ENCODE measurements at regions of chr9 and their contacts with region 1.

Region 1: DNA sequence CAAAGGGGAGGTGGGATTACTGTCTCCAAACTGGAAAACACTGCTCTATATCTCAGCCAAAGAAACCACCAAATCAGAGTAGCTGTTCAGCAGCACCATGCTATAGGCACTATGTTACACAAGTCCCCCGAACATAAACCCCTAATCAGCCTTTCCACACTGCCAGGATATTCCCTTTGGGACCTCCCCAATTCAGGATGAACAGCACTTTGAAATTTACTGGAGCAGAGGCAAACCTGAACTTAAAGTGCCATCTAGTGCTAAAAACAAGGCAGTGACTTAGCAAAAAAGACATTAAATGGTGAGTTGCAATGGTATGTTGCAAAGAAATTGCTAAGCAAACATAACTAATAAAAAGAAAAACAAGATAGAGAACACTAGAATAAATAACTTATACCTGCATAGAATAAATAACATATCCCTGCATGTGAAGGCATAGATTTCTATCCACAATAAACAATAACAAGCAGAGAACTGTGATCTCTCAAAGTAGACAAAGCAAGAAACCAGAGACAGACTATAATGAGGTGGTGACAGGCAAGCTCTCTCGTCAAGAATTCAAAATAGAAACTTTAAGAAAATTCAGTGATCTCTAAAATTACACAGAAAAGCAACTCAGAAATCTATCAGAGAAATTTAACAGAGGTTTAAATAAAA is 584.4 kb upstream of the ACO1 start:
- DNase-seq: no peak
- H3K4me3 Mint-ChIP-seq: no peak overlapping the region
- H3K27ac Mint-ChIP-seq: peak overlapping the region; percentile 52
- H3K4me1 Mint-ChIP-seq: peaks cover 8% of the 10 kb centered on the region
- H3K27me3 Mint-ChIP-seq: peaks cover 3% of the 10 kb centered on the region

Region 2: GRCh38 chr9:29866556-29866955 is 1933.5 kb before region 1 on chr9:
- intact Hi-C with region 1: loop called (anchors 10 kb)
- DNase-seq: no peak
- H3K4me3 Mint-ChIP-seq: no peak overlapping the region
- H3K27ac Mint-ChIP-seq: no peak overlapping the region
- H3K4me1 Mint-ChIP-seq: no peaks in the 10 kb centered on the region
- H3K27me3 Mint-ChIP-seq: no peaks in the 10 kb centered on the region

Region 3: GRCh38 chr9:31119882-31120454 is 680.1 kb before region 1 on chr9:
- intact Hi-C with region 1: loop called (anchors 1 kb)
- DNase-seq: no peak
- H3K4me3 Mint-ChIP-seq: no peak overlapping the region
- H3K27ac Mint-ChIP-seq: no peak overlapping the region
- H3K4me1 Mint-ChIP-seq: no peaks in the 10 kb centered on the region
- H3K27me3 Mint-ChIP-seq: no peaks in the 10 kb centered on the region

Region 4: DNA sequence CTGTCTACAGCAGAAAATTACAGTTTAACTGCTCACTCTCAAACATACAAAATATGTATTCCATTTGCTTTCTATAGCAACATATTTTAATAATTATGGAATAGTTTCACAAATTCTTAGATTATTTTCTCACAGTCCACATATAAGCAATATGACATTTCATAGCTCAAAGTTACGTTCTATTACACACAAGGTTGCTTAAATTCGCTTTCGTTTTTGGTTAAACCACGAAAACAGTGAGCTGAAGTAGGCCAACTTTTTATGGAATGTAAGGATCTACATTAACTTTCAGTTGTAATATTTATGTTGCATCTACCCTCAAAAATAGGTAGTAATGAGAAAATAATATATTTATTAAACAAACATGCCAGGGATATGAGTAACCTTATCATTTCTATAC is 381.7 kb before region 1 on chr9:
- intact Hi-C with region 1: loop called (anchors 10 kb)
- DNase-seq: no peak
- H3K4me3 Mint-ChIP-seq: no peak overlapping the region
- H3K27ac Mint-ChIP-seq: no peak overlapping the region
- H3K4me1 Mint-ChIP-seq: no peaks in the 10 kb centered on the region
- H3K27me3 Mint-ChIP-seq: no peaks in the 10 kb centered on the region

Region 5: DNA sequence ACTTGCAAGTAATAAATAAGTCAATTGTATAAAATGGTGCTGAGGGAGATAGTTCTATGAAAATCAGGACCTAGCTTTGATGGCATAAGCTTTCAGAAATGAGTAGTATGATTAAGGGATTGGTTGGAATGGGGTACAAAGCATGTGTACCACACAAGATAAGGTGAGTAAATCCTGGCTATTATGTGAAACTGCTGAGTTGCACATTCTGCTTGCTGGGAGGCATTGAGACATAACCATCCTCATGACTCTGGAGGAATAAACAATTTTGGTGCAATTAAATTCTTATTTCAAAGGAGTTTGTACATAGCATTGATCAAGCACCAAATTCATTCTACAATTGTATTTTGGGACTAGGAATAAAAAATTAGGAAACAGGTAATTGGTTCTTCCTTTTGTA is 170.8 kb before region 1 on chr9:
- intact Hi-C with region 1: no loop called
- DNase-seq: no peak
- H3K4me3 Mint-ChIP-seq: no peak overlapping the region
- H3K27ac Mint-ChIP-seq: no peak overlapping the region
- H3K4me1 Mint-ChIP-seq: no peaks in the 10 kb centered on the region
- H3K27me3 Mint-ChIP-seq: no peaks in the 10 kb centered on the region

Region 6: DNA sequence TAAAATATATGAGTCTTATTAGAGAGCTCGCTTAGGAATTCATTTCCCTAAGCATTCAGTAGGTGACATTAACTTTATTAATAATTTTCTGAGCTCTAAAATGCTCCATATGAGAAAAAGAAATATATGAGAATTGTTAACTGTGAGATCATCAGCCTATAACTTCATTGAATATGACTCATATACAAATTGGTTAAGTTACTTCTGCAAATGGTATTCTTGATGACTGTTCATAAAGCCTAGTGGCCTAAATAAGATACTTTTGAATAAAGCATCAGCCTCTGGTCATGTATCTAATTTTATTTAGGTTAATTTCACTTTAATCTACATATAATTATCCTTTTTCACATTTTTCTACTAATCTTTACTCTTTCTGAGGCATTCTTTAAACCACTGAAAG is 125.8 kb before region 1 on chr9:
- intact Hi-C with region 1: loop called (anchors 5 kb)
- DNase-seq: no peak
- H3K4me3 Mint-ChIP-seq: no peak overlapping the region
- H3K27ac Mint-ChIP-seq: no peak overlapping the region
- H3K4me1 Mint-ChIP-seq: peaks cover 32% of the 10 kb centered on the region
- H3K27me3 Mint-ChIP-seq: no peaks in the 10 kb centered on the region

Region 7: DNA sequence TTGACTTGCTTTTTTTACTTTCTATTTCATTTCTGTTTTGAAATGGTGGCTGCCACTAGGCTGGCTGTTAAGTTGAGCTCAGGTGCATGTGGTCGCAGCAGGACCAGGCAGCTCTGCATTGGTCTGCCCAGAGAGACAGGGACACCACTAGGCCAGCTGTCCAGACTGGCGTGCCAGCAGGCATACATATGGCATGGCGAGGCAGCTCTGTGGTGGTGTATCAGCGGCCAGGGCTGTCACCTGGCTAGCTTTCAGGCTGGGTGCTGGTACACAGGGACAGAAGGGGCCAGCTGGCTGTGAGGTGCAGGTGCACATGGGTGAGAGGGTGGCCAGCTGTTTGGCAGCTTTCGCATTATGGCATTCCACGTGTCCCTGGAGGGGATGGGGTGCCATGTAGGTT is 69.7 kb before region 1 on chr9:
- intact Hi-C with region 1: no loop called
- DNase-seq: no peak
- H3K4me3 Mint-ChIP-seq: no peak overlapping the region
- H3K27ac Mint-ChIP-seq: no peak overlapping the region
- H3K4me1 Mint-ChIP-seq: no peaks in the 10 kb centered on the region
- H3K27me3 Mint-ChIP-seq: no peaks in the 10 kb centered on the region

Region 8: GRCh38 chr9:31908158-31908890 is 108.2 kb after region 1 on chr9:
- intact Hi-C with region 1: no loop called
- DNase-seq: no peak
- H3K4me3 Mint-ChIP-seq: no peak overlapping the region
- H3K27ac Mint-ChIP-seq: no peak overlapping the region
- H3K4me1 Mint-ChIP-seq: no peaks in the 10 kb centered on the region
- H3K27me3 Mint-ChIP-seq: no peaks in the 10 kb centered on the region

Region 9: GRCh38 chr9:31950756-31951155 is 150.7 kb after region 1 on chr9:
- intact Hi-C with region 1: no loop called
- DNase-seq: no peak
- H3K4me3 Mint-ChIP-seq: no peak overlapping the region
- H3K27ac Mint-ChIP-seq: no peak overlapping the region
- H3K4me1 Mint-ChIP-seq: no peaks in the 10 kb centered on the region
- H3K27me3 Mint-ChIP-seq: no peaks in the 10 kb centered on the region